ENCODE measurements at regions of chr3 and their contacts with region 1.

Region 1: DNA sequence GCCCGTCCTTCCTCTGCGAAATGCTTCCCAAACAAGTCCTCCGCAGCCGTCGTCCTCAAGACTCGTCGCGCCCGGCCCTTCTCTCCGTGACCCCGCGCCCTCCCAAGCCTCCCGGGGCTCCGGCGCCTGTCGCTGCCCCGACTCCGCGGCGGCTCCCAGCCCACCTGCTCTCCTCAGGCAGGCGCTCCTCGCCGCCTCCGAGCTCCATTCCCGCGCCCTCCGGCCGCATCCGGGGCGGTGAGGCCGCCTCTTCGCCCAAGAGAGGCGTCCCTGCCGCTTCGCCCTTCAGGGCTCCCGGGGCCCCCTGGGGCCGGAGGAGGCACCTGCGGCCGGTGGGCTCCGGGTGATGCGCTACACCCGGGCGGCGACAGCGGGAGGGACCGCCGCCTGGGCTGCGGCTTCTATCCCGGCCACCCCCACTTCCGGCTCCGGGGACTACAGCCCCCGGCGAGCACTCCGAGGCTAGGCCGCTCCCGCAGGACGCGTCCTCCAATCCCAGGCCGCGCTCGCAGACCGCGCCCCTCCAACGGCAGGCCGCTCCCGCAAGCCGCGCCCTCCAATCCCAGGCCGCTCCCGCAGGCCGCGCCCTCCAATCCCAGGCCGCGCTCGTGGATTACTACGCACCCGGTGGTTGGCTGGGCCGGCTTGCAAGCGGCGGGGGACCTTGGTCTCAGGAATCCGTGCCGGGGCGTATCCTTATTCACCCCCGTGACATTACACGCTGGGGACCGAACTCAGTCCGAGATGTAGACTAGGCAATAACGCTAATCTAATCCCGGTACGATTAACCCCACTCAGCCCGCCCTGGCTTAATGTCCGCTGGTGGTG is at the start of gene RUBCN:
- DNase-seq: peak; percentile 97
- ATAC-seq: peak; percentile 97
- H3K4me3 Mint-ChIP-seq: peak within 1 kb of the TSS; percentile 85
- H3K27ac Mint-ChIP-seq: peak within 1 kb of the TSS; percentile 95
- H3K4me1 Mint-ChIP-seq: peaks cover 32% of the 10 kb centered on the region
- H3K27me3 Mint-ChIP-seq: no peaks in the 10 kb centered on the region
- total RNA-seq, gene RUBCN: 22.7 to 23.4 TPM

Region 2: GRCh38 chr3:197554562-197555280 is 182.0 kb before region 1 on chr3:
- CTCF ChIA-PET with region 1: no interaction called
- POLR2A ChIA-PET with region 1: no interaction called
- intact Hi-C with region 1: loop called in 1 of 2 experiments (anchors 1 kb)
- DNase-seq: peak; percentile 98
- ATAC-seq: peak; percentile 97
- H3K4me3 Mint-ChIP-seq: peak overlapping the region; percentile 84
- H3K27ac Mint-ChIP-seq: peak overlapping the region; percentile 89
- H3K4me1 Mint-ChIP-seq: peaks cover 10% of the 10 kb centered on the region
- H3K27me3 Mint-ChIP-seq: peaks cover 13% of the 10 kb centered on the region

Region 3: GRCh38 chr3:197683191-197683590 is 53.5 kb before region 1 on chr3:
- CTCF ChIA-PET with region 1: no interaction called
- POLR2A ChIA-PET with region 1: no interaction called
- intact Hi-C with region 1: no loop called
- DNase-seq: no peak
- ATAC-seq: no peak
- H3K4me3 Mint-ChIP-seq: no peak overlapping the region
- H3K27ac Mint-ChIP-seq: no peak overlapping the region
- H3K4me1 Mint-ChIP-seq: no peaks in the 10 kb centered on the region
- H3K27me3 Mint-ChIP-seq: no peaks in the 10 kb centered on the region

Region 4: GRCh38 chr3:197749601-197750395 is 13.1 kb after region 1 on chr3 and contains the start of gene FYTTD1:
- CTCF ChIA-PET with region 1: interaction called, 5 read pairs
- POLR2A ChIA-PET with region 1: interaction called, 3 read pairs
- intact Hi-C with region 1: loop called (anchors 1 kb)
- DNase-seq: peak; percentile 89
- ATAC-seq: peak; percentile 81
- H3K4me3 Mint-ChIP-seq: peak within 1 kb of the TSS; percentile 89
- H3K27ac Mint-ChIP-seq: peak within 1 kb of the TSS; percentile 87
- H3K4me1 Mint-ChIP-seq: peaks cover 37% of the 10 kb centered on the region
- H3K27me3 Mint-ChIP-seq: no peaks in the 10 kb centered on the region
- total RNA-seq, gene FYTTD1: 20.7 to 25.6 TPM

Region 5: DNA sequence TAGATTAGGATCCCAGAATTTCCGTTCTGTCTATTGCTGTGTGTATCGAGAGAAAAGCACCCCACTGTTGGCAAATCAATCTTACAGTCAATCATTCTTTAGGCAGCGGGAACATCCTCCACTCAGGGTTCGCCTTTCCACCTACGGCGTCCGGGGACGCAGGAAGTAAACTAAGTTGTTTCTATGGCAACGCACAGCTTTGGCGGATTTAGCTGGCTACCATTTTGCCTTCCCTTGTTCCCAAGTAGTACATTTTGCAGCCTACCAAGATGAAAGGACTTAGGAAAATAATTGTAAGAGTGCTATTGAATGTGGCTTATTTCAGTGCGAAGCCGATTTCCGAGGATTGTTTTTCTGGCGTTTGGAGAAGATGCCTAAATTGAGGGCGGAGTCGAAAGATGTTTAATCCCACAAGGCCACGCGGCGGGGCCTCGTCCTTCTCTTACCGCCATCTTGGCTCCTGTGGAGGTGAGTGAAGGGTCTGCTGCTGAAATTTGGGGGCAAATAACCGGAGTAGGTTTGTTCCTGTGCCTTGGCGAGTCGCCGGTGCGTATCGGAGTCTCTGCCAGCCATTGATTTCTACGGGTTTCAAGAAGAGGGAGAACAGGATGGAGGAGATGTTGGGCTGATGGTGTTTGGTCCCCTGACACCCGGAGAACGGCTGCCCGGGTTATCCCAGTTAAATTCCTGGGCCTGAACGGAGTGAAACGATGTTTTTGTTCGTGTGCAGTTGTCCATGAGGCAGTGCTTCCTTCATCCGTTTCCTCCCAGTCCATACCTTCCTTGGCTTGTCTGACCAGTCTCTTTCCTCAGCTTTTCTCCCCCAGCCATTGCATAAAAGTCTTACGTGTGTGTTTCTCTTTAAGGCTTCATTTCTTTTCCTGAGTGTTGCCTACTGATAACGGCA is 213.3 kb after region 1 on chr3 and contains the start of gene RPL35A:
- CTCF ChIA-PET with region 1: no interaction called
- POLR2A ChIA-PET with region 1: interaction called, 3 read pairs
- intact Hi-C with region 1: loop called in 1 of 2 experiments (anchors 2 kb)
- DNase-seq: peak; percentile 90
- ATAC-seq: peak; percentile 89
- H3K4me3 Mint-ChIP-seq: peak within 1 kb of the TSS; percentile 87
- H3K27ac Mint-ChIP-seq: peak within 1 kb of the TSS; percentile 97
- H3K4me1 Mint-ChIP-seq: peaks cover 47% of the 10 kb centered on the region
- H3K27me3 Mint-ChIP-seq: no peaks in the 10 kb centered on the region
- total RNA-seq, gene RPL35A: 1,121 to 1,734 TPM

Region 6: DNA sequence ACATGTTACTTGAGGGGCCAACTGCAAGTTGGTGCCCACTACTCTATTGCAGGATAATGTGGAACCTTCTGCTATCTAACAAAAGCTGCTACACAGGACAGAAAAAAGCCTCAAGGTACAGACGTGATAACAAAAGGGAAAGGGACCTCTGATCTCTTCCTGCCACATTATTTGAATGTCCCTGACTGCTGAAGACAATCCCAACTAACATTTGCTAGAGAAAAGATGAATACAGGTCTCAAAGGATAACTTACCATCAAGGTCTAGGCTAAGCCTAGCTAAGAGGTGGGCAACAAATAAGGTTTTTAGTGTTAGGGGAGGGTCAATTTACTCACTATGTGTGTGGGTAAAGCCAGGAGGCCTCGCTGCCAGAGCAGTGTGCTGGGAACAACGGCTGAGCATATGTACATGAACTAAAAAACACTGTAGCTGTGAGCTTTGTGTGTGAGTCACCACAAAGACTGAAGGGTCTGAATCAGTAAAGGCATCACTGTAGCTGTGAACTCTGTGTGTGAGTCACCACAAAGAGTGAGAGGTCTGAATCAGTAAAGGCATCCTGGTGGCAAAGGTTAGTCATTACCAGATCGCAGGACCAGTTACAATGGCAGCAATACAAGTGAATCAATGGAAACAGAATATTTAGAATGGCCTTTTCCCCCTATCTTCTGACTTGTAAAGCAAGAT is 335.0 kb after region 1 on chr3:
- CTCF ChIA-PET with region 1: no interaction called
- POLR2A ChIA-PET with region 1: no interaction called
- intact Hi-C with region 1: loop called in 1 of 2 experiments (anchors 5 kb)
- DNase-seq: peak; percentile 77
- ATAC-seq: peak; percentile 100
- H3K4me3 Mint-ChIP-seq: peak overlapping the region; percentile 36
- H3K27ac Mint-ChIP-seq: peak overlapping the region; percentile 95
- H3K4me1 Mint-ChIP-seq: peaks cover 43% of the 10 kb centered on the region
- H3K27me3 Mint-ChIP-seq: peaks cover 12% of the 10 kb centered on the region

Measured in activated CD4-positive, alpha-beta T cell treated with anti-CD3 and anti-CD28 coated beads for 36 hours (primary cell).